Lower leg skin (tissue), 4 donors: ENCODE measurements at regions of chr1 and their contacts with region 1.

Region 1: DNA sequence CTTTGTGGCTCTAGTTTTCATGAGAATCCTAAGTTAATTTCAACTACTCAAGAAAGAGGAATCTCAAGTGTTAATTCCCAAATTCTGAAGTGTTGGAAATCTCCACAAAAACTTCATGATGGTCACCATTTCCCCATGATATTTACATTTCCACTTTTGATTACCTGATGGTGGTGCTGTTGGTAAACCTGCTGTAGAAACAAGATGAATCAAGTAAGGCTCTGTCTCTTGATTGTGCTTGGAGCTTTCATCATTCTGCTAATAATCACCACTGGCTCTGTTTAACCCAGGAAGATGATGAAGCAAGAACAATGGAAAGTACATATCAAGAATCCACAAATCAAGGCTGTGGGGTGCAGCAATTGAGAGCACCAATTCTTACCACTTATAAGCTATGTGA is 77.8 kb downstream of the C4BPA start:
- DNase-seq: no peak
- H3K4me3 ChIP-seq: no peak overlapping the region
- CTCF ChIP-seq: no peak
- POLR2A ChIP-seq: no peak

Region 2: GRCh38 chr1:207115269-207115668 is 66.6 kb before region 1 on chr1:
- intact Hi-C with region 1: loop called (anchors 5 kb)
- DNase-seq: no peak
- H3K4me3 ChIP-seq: no peak overlapping the region
- CTCF ChIP-seq: no peak
- POLR2A ChIP-seq: no peak

Region 3: GRCh38 chr1:207429963-207430362 is 248.1 kb after region 1 on chr1:
- intact Hi-C with region 1: loop called (anchors 10 kb)
- DNase-seq: no peak
- H3K4me3 ChIP-seq: no peak overlapping the region
- CTCF ChIP-seq: no peak
- POLR2A ChIP-seq: no peak